ENCODE measurements at regions of chr12 and their contacts with region 1.

Region 1: GRCh38 chr12:94207849-94208621 is 59.7 kb downstream of the PLXNC1 start:
- DNase-seq: peak; percentile 84
- H3K4me3 Mint-ChIP-seq: peak overlapping the region; percentile 84
- H3K27ac Mint-ChIP-seq: peak overlapping the region; percentile 95
- H3K4me1 Mint-ChIP-seq: peaks cover 59% of the 10 kb centered on the region
- H3K27me3 Mint-ChIP-seq: no peaks in the 10 kb centered on the region

Region 2: DNA sequence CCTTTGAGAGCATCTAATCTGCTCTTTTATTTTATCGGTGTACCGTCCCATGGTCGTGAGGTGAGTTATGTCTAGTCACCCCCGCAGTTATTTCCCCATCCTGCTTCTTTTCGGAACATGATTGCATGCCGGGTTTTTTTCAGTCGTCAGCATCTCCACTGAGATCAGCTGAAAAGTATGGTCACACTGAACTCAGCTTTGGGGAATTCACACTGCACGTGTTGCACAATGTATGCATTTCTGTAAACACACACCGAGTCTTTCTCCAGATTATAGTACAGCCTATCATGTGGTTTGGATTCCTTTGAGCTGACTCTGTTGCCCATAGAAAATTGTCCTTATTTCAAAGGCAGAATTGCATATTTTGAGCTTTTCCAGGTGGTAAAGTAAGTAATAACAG is 35.1 kb before region 1 on chr12:
- intact Hi-C with region 1: loop called (anchors 1 kb)
- DNase-seq: no peak
- H3K4me3 Mint-ChIP-seq: no peak overlapping the region
- H3K27ac Mint-ChIP-seq: no peak overlapping the region
- H3K4me1 Mint-ChIP-seq: peaks cover 54% of the 10 kb centered on the region
- H3K27me3 Mint-ChIP-seq: no peaks in the 10 kb centered on the region

Region 3: GRCh38 chr12:94244165-94245133 is 36.4 kb after region 1 on chr12:
- intact Hi-C with region 1: loop called (anchors 1 kb)
- DNase-seq: peak; percentile 80
- H3K4me3 Mint-ChIP-seq: peak overlapping the region; percentile 53
- H3K27ac Mint-ChIP-seq: peak overlapping the region; percentile 77
- H3K4me1 Mint-ChIP-seq: peaks cover 33% of the 10 kb centered on the region
- H3K27me3 Mint-ChIP-seq: no peaks in the 10 kb centered on the region

Region 4: DNA sequence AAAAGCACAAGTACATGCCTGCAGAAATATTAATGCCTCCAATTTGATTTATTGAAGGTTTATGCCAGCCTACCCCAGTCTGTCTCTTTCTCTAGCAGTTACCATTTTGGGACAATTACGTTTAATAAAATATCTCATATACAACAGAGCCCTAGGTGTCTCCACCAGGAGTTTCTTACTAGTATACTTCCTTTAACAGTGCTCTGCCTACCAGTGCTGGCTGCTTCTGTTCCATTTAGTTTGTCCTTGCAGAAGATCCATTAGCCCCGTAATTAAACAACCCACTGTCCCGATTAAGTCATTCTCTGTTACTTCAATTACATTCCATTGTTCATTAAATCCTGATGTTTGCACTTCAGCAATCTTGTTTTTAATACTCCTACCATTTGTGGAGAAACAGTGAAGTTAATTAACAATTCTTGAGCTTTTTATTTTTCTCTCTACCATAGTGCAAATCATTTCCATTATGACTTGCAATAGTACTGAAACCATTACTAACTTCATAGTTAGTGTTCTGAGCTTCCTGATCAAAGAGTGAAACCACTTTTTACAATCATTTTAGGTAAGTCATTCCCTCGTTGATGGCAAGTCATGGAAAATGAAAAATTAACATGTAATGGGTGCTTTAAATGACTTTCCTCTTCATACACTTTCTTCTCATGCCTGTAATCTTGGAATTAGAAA is 61.4 kb after region 1 on chr12:
- intact Hi-C with region 1: loop called (anchors 1 kb)
- DNase-seq: no peak
- H3K4me3 Mint-ChIP-seq: peak overlapping the region; percentile 6
- H3K27ac Mint-ChIP-seq: peak overlapping the region; percentile 65
- H3K4me1 Mint-ChIP-seq: peaks cover 45% of the 10 kb centered on the region
- H3K27me3 Mint-ChIP-seq: no peaks in the 10 kb centered on the region

Region 5: DNA sequence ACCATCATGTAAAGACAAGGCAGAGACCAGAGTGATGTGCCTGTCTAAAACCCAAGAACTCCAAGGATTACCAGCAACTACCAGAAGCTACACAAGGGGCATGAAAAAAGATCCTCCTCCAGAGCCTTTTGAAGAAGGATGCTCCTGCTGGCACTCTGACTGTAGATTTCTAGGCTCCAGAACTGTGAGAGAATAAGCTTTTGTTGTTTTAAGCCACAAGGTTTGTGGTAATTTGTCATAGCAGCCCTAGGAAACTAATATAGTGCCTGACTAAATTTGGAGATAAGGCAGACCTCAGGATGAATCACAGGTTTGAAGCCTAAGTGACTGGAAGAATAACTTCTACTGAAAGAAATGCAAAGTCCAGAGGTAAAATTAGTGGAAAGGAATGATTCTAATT is 118.7 kb after region 1 on chr12:
- intact Hi-C with region 1: loop called (anchors 2 kb)
- DNase-seq: no peak
- H3K4me3 Mint-ChIP-seq: no peak overlapping the region
- H3K27ac Mint-ChIP-seq: peak overlapping the region; percentile 65
- H3K4me1 Mint-ChIP-seq: peaks cover 24% of the 10 kb centered on the region
- H3K27me3 Mint-ChIP-seq: no peaks in the 10 kb centered on the region

Region 6: DNA sequence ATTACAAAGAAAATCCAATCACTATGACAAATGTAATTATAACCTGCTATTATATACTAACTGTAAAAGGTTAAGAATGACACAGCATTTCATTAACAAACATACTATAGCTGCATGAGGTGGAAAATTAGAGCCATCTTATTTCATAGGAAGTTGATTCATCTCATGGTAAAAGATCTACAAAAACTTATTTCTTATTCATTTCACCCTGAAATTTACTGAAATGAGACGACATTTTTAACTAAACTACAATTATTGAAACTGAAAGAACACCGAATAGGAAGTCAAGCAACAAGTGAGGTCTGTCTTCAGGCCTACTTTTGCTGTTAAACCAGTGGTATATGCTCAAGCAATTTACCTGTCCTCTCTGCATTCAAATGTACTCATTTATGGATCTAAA is 164.4 kb after region 1 on chr12:
- intact Hi-C with region 1: loop called (anchors 1 kb)
- DNase-seq: no peak
- H3K4me3 Mint-ChIP-seq: peak overlapping the region; percentile 35
- H3K27ac Mint-ChIP-seq: peak overlapping the region; percentile 85
- H3K4me1 Mint-ChIP-seq: peaks cover 23% of the 10 kb centered on the region
- H3K27me3 Mint-ChIP-seq: no peaks in the 10 kb centered on the region

Region 7: DNA sequence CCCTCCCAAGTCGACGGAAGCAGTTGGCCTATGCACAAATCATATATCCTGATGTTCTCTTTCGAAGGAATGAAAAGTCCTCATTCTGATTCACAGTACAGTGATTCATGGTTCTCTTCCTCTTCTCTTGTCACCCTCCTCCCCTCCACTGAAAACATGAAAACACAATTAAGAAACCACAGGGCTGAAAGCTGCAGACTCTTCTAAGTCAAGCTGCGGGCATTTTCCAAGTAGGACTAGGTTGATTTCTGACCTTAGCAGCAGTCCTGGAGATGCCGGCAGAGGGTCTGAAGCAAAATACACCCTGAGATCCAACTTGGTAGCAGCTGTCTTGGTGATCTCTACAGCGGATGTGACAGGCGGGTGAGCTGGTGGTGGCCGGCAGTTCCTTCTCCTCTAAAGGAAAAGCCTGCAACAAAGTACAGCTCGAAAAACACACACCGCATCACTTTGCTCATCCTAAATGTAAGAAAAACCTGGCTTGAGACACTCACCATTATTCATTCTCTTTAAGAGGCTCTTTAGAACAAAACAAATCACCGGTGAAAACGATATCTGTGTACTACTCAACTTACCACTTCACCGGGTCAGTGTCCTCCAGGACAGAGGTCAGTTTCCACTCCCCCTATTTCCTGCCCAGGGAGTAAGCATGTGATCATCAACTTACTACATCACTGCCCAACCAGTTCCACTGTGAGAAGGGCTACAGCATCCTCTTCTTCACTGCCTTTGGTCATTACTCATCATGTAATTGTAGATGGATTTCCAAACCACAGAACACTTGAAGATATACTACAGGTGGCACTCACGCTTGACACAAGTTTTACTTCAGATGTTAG is 436.3 kb after region 1 on chr12:
- intact Hi-C with region 1: loop called (anchors 5 kb)
- DNase-seq: peak; percentile 70
- H3K4me3 Mint-ChIP-seq: peak overlapping the region; percentile 47
- H3K27ac Mint-ChIP-seq: peak overlapping the region; percentile 41
- H3K4me1 Mint-ChIP-seq: peaks cover 40% of the 10 kb centered on the region
- H3K27me3 Mint-ChIP-seq: peaks cover 64% of the 10 kb centered on the region

Measured in activated CD4-positive, alpha-beta T cell treated with anti-CD3 and anti-CD28 coated beads, Interleukin-2, amount 10 ng/mL, durations not matched to agents 24 days and 14 days (primary cell).